Activated CD4-positive, alpha-beta memory T cell treated with anti-CD3 and anti-CD28 coated beads for 36 hours (primary cell): ENCODE measurements at regions of chr10 and their contacts with region 1.

Region 1: GRCh38 chr10:46268076-46268881 is 18.5 kb upstream of the ANTXRL start:
- DNase-seq: peak; percentile 83
- H3K4me3 Mint-ChIP-seq: no peak overlapping the region
- H3K27ac Mint-ChIP-seq: no peak overlapping the region
- H3K4me1 Mint-ChIP-seq: peaks cover 50% of the 10 kb centered on the region
- H3K27me3 Mint-ChIP-seq: no peaks in the 10 kb centered on the region

Region 2: GRCh38 chr10:46092524-46093081 is 175.7 kb before region 1 on chr10:
- CTCF ChIA-PET with region 1: no interaction called
- POLR2A ChIA-PET with region 1: no interaction called
- intact Hi-C with region 1: loop called (anchors 5 kb)
- DNase-seq: no peak
- H3K4me3 Mint-ChIP-seq: no peak overlapping the region
- H3K27ac Mint-ChIP-seq: no peak overlapping the region
- H3K4me1 Mint-ChIP-seq: peaks cover 5% of the 10 kb centered on the region
- H3K27me3 Mint-ChIP-seq: no peaks in the 10 kb centered on the region

Region 3: DNA sequence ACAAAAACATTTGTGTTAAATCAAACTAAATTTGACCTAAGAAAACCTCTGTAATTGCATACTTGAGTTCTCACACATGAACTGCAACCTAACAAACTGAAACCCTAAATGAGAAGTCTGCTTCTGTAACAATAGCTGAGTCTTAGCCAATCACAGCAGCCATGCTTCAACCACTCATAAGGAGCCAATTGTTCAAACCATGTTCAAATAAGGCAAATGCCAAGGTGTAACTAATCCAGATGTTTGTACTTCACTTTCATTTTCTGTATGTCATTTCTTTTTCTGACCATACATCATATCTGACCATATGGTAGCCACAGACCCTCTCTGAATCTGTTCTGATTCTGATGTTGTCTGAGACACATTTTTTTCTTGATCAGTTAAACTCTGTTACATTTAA is 29.0 kb before region 1 on chr10:
- CTCF ChIA-PET with region 1: no interaction called
- POLR2A ChIA-PET with region 1: no interaction called
- intact Hi-C with region 1: loop called (anchors 1 kb)
- DNase-seq: peak; percentile 8
- H3K4me3 Mint-ChIP-seq: no peak overlapping the region
- H3K27ac Mint-ChIP-seq: no peak overlapping the region
- H3K4me1 Mint-ChIP-seq: peaks cover 26% of the 10 kb centered on the region
- H3K27me3 Mint-ChIP-seq: no peaks in the 10 kb centered on the region

Region 4: DNA sequence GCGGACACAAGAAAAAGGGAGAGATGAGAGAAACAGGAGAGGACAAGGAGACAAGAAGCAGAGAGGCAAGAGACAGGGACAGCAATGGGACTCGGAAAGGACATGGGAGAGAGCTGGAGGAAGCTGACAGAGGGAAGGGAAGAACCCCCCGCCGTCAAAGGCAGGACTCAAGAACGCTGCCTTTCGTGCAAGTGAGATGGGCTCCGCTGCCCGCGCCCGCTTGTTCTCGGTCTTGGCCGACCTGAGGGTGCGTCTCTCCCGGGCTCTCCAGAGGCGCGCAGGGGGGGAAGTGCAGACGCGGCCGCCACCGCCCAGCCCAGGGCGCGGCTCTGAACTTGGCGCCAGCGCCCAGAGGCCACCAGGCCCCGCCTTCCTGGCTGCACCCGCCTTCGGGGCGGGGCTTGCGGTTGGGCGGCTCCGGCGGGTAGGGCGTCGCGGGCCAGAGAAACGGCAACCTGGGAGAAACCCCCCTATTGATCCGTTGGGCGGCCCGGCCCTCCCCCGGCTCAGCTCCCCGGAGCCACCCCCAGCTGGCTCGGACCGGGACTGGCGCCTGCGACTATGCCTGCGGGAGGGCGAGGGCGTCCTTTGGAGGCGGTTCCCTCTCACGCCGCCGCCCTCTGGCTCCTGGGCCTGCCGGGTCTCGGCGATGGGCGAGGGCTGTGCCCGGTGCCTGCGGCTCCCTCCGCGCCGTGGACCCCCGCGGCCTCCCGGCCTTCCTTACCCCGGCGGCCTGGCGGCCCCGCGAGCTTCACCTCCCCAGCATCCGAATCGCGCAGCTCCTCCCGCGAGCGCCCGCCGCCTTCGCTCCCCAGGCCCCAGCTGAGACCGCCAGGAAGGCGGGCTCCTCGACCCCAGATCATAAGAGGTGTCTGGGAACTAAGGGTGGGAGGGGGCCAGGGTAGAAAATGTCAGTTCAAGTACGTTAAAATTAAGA is 16.3 kb after region 1 on chr10:
- CTCF ChIA-PET with region 1: interaction called, 5 read pairs
- POLR2A ChIA-PET with region 1: interaction called, 3 read pairs
- intact Hi-C with region 1: loop called (anchors 1 kb)
- DNase-seq: peak; percentile 88
- H3K4me3 Mint-ChIP-seq: peak overlapping the region; percentile 85
- H3K27ac Mint-ChIP-seq: peak overlapping the region; percentile 39
- H3K4me1 Mint-ChIP-seq: peaks cover 20% of the 10 kb centered on the region
- H3K27me3 Mint-ChIP-seq: peaks cover 1% of the 10 kb centered on the region